ENCODE measurements at regions of chr1 and their contacts with region 1.

Region 1: GRCh38 chr1:111197598-111198284 is 2.7 kb downstream of the DENND2D start:
- DNase-seq: peak; percentile 58 to 78 (median 73)
- H3K4me3 ChIP-seq: peak overlapping the region; percentile 87 to 90
- H3K4me3 Mint-ChIP-seq: peak overlapping the region; percentile 99 to 100 (median 100)
- H3K27ac ChIP-seq: peak overlapping the region; percentile 84
- H3K27ac Mint-ChIP-seq: peak overlapping the region; percentile 92 to 98 (median 97)
- H3K4me1 ChIP-seq: peaks cover 78% of the 10 kb centered on the region
- H3K4me1 Mint-ChIP-seq: peaks cover 61 to 96% (median 71%) of the 10 kb centered on the region in 4 donors
- H3K27me3 ChIP-seq: no peaks in the 10 kb centered on the region
- H3K27me3 Mint-ChIP-seq: no peaks in the 10 kb centered on the region

Region 2: GRCh38 chr1:109722908-109723691 is 1474.6 kb before region 1 on chr1:
- CTCF ChIA-PET with region 1: no interaction called
- POLR2A ChIA-PET with region 1: no interaction called
- intact Hi-C with region 1: no loop called
- DNase-seq: no peak
- H3K4me3 ChIP-seq: no peak overlapping the region
- H3K4me3 Mint-ChIP-seq: no peak overlapping the region
- H3K27ac ChIP-seq: no peak overlapping the region
- H3K27ac Mint-ChIP-seq: peak overlapping the region in 1 of 7 donors; percentile 52
- H3K4me1 ChIP-seq: no peaks in the 10 kb centered on the region
- H3K4me1 Mint-ChIP-seq: no peaks in the 10 kb centered on the region
- H3K27me3 ChIP-seq: no peaks in the 10 kb centered on the region
- H3K27me3 Mint-ChIP-seq: no peaks in the 10 kb centered on the region

Region 3: DNA sequence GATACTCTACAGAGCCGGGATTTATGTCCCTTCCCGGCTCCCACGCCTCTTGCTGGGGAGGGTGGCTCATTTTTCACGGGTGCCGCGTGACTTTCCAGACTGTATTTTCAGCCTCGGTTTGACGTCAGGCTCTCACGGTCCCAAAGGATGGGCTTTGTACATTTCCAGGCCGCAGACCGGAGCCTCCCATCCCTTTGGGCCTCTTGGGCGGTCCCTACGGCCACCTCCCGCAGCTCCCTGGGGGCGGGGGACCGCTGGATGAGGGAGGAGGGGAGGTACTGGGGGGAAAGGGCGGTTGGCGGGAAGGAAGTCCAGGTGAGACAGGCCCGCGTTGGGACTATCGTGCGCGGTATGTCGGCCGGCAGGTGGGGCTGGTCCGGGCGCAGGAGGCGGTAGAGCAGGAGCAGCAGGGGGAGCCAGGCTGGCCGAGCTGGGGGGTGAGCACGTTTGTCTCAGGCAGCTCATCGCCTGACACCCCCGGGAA is 1067.6 kb before region 1 on chr1:
- CTCF ChIA-PET with region 1: no interaction called
- POLR2A ChIA-PET with region 1: no interaction called
- intact Hi-C with region 1: no loop called
- DNase-seq: no peak
- H3K4me3 ChIP-seq: no peak overlapping the region
- H3K4me3 Mint-ChIP-seq: no peak overlapping the region
- H3K27ac ChIP-seq: no peak overlapping the region
- H3K27ac Mint-ChIP-seq: no peak overlapping the region
- H3K4me1 ChIP-seq: no peaks in the 10 kb centered on the region
- H3K4me1 Mint-ChIP-seq: peaks cover 0 to 4% (median under 1%) of the 10 kb centered on the region in 4 donors
- H3K27me3 ChIP-seq: peaks cover 11% of the 10 kb centered on the region
- H3K27me3 Mint-ChIP-seq: peaks cover 32 to 34% of the 10 kb centered on the region in 2 donors

Region 4: DNA sequence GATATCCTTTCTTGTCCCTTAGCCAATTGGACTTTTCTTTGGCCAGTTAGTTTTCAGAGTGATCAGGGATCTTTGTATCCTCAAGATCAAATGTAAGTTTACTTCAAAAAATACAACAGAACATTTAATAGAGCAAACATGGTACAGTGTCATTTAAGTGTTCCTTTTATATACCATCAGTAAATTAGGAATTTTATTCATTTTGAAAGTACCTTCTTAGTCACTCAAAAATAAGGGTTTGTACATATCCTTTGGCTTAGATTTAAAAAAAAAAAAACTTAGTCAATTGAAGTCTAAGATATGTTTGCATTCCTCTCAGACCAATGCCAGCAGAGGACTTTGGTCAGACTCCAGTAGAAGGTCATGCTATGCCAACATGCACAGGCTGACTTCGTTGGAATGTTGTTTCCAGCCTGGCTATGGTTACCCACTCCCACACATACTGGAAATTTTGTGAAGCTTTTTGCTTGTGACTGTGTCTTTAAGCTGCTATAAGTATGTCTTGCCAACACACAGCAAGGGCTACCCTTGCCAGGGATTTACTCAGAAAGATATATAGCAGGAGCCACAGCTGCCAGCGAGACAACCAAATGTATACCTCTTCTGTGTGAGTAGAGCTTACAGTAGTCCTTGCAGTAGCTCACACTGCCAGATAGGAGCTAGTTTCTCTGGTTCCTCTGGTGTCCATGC is 152.6 kb before region 1 on chr1:
- CTCF ChIA-PET with region 1: no interaction called
- POLR2A ChIA-PET with region 1: no interaction called
- intact Hi-C with region 1: no loop called
- DNase-seq: no peak
- H3K4me3 ChIP-seq: no peak overlapping the region
- H3K4me3 Mint-ChIP-seq: no peak overlapping the region
- H3K27ac ChIP-seq: no peak overlapping the region
- H3K27ac Mint-ChIP-seq: no peak overlapping the region
- H3K4me1 ChIP-seq: no peaks in the 10 kb centered on the region
- H3K4me1 Mint-ChIP-seq: no peaks in the 10 kb centered on the region
- H3K27me3 ChIP-seq: no peaks in the 10 kb centered on the region
- H3K27me3 Mint-ChIP-seq: peaks cover 0 to 10% of the 10 kb centered on the region in 2 donors

Region 5: GRCh38 chr1:111082421-111083192 is 115.1 kb before region 1 on chr1:
- CTCF ChIA-PET with region 1: no interaction called
- POLR2A ChIA-PET with region 1: no interaction called
- intact Hi-C with region 1: no loop called
- DNase-seq: no peak
- H3K4me3 ChIP-seq: no peak overlapping the region
- H3K4me3 Mint-ChIP-seq: no peak overlapping the region
- H3K27ac ChIP-seq: no peak overlapping the region
- H3K27ac Mint-ChIP-seq: no peak overlapping the region
- H3K4me1 ChIP-seq: no peaks in the 10 kb centered on the region
- H3K4me1 Mint-ChIP-seq: no peaks in the 10 kb centered on the region
- H3K27me3 ChIP-seq: peaks cover 4% of the 10 kb centered on the region
- H3K27me3 Mint-ChIP-seq: peaks cover 30 to 38% of the 10 kb centered on the region in 2 donors

Region 6: DNA sequence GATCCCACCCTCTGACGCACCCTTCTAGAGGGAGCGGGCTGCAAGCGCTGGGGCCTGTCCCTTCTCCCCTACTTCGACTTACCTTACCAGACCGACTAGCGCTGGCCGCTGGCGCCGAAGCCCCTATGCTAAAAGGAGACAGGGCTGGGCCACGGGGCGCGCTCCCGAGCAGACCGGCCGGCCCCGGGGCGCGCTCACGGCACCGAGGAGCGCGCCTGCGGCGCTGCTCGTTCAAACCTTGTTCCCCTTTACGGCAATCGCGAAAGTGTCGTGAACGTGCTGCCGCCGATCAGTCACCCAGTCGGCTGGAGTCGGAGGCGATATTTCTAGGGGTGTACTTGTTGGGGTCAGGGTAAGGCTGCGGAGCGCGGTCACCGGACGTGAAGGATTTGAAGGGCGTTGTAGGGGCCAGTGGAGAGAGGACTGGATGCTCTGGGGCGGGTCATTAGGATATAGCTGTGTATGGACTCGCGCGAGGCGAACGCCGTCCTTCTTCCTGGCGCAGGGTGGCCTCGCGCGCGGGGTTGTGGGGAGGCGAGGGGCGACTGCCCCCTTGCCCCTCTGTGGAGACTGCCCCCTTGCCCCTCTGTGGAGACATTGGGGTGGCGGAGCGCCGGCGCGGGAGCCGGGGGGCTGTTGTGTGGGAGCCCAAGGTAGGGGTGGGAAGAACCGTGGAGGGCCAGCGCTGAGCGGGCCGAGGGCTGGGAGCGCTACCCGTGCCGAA is 57.6 kb before region 1 on chr1 and contains the starts of genes CEPT1 and DRAM2:
- CTCF ChIA-PET with region 1: interaction called, 3 read pairs
- POLR2A ChIA-PET with region 1: interaction called, 36 read pairs
- intact Hi-C with region 1: loop called (anchors 5 kb)
- DNase-seq: peak; percentile 89 to 95 (median 91)
- H3K4me3 ChIP-seq: peak within 1 kb of the TSS; percentile 57 to 97
- H3K4me3 Mint-ChIP-seq: peak within 1 kb of the TSS; percentile 98 to 100 (median 100)
- H3K27ac ChIP-seq: peak within 1 kb of the TSS; percentile 79
- H3K27ac Mint-ChIP-seq: peak within 1 kb of the TSS; percentile 84 to 100 (median 99)
- H3K4me1 ChIP-seq: peaks cover 54% of the 10 kb centered on the region
- H3K4me1 Mint-ChIP-seq: peaks cover 32 to 54% (median 41%) of the 10 kb centered on the region in 4 donors
- H3K27me3 ChIP-seq: no peaks in the 10 kb centered on the region
- H3K27me3 Mint-ChIP-seq: no peaks in the 10 kb centered on the region
- total RNA-seq, gene CEPT1: 49.1 to 49.6 TPM
- total RNA-seq, gene DRAM2: 37.5 to 38.8 TPM

Region 7: GRCh38 chr1:111183308-111184069 is 14.3 kb before region 1 on chr1:
- CTCF ChIA-PET with region 1: interaction called, 14 read pairs
- POLR2A ChIA-PET with region 1: interaction called, 234 read pairs
- intact Hi-C with region 1: loop called (anchors 2 kb)
- DNase-seq: no peak
- H3K4me3 ChIP-seq: no peak overlapping the region
- H3K4me3 Mint-ChIP-seq: no peak overlapping the region
- H3K27ac ChIP-seq: no peak overlapping the region
- H3K27ac Mint-ChIP-seq: peak overlapping the region in 6 of 7 donors; percentile 55 to 84 (median 70)
- H3K4me1 ChIP-seq: peaks cover 35% of the 10 kb centered on the region
- H3K4me1 Mint-ChIP-seq: peaks cover 47 to 78% (median 59%) of the 10 kb centered on the region in 4 donors
- H3K27me3 ChIP-seq: no peaks in the 10 kb centered on the region
- H3K27me3 Mint-ChIP-seq: no peaks in the 10 kb centered on the region

Region 8: GRCh38 chr1:111334169-111334568 is 136.4 kb after region 1 on chr1:
- CTCF ChIA-PET with region 1: interaction called, 95 read pairs
- POLR2A ChIA-PET with region 1: interaction called, 26 read pairs
- intact Hi-C with region 1: loop called (anchors 1 kb)
- DNase-seq: peak; percentile 49 to 69 (median 68)
- H3K4me3 ChIP-seq: no peak overlapping the region
- H3K4me3 Mint-ChIP-seq: peak overlapping the region in 2 of 8 donors; percentile 24 to 45
- H3K27ac ChIP-seq: no peak overlapping the region
- H3K27ac Mint-ChIP-seq: peak overlapping the region in 3 of 7 donors; percentile 1 to 74 (median 3)
- H3K4me1 ChIP-seq: peaks cover 7% of the 10 kb centered on the region
- H3K4me1 Mint-ChIP-seq: peaks cover 2 to 12% (median 4%) of the 10 kb centered on the region in 4 donors
- H3K27me3 ChIP-seq: no peaks in the 10 kb centered on the region
- H3K27me3 Mint-ChIP-seq: no peaks in the 10 kb centered on the region

Region 9: GRCh38 chr1:111346089-111346885 is 148.5 kb after region 1 on chr1:
- CTCF ChIA-PET with region 1: interaction called, 7 read pairs
- POLR2A ChIA-PET with region 1: interaction called, 12 read pairs
- intact Hi-C with region 1: loop called (anchors 5 kb)
- DNase-seq: peak; percentile 92 to 94 (median 94)
- H3K4me3 ChIP-seq: peak overlapping the region; percentile 59 to 82
- H3K4me3 Mint-ChIP-seq: peak overlapping the region; percentile 87 to 96 (median 92)
- H3K27ac ChIP-seq: peak overlapping the region; percentile 46
- H3K27ac Mint-ChIP-seq: peak overlapping the region; percentile 84 to 97 (median 96)
- H3K4me1 ChIP-seq: peaks cover 16% of the 10 kb centered on the region
- H3K4me1 Mint-ChIP-seq: peaks cover 13 to 25% (median 18%) of the 10 kb centered on the region in 4 donors
- H3K27me3 ChIP-seq: no peaks in the 10 kb centered on the region
- H3K27me3 Mint-ChIP-seq: no peaks in the 10 kb centered on the region

Region 10: GRCh38 chr1:111399792-111400610 is 202.3 kb after region 1 on chr1:
- CTCF ChIA-PET with region 1: interaction called, 63 read pairs
- POLR2A ChIA-PET with region 1: interaction called, 10 read pairs
- intact Hi-C with region 1: loop called (anchors 1 kb)
- DNase-seq: peak in 4 of 5 donors; percentile 27 to 39 (median 33)
- H3K4me3 ChIP-seq: no peak overlapping the region
- H3K4me3 Mint-ChIP-seq: peak overlapping the region in 1 of 8 donors; percentile 18
- H3K27ac ChIP-seq: no peak overlapping the region
- H3K27ac Mint-ChIP-seq: peak overlapping the region in 4 of 7 donors; percentile 18 to 55 (median 34)
- H3K4me1 ChIP-seq: peaks cover 6% of the 10 kb centered on the region
- H3K4me1 Mint-ChIP-seq: peaks cover 7 to 18% (median 13%) of the 10 kb centered on the region in 4 donors
- H3K27me3 ChIP-seq: no peaks in the 10 kb centered on the region
- H3K27me3 Mint-ChIP-seq: no peaks in the 10 kb centered on the region

Region 11: GRCh38 chr1:111441573-111442192 is 243.9 kb after region 1 on chr1:
- CTCF ChIA-PET with region 1: interaction called, 3 read pairs
- POLR2A ChIA-PET with region 1: interaction called, 4 read pairs
- intact Hi-C with region 1: loop called (anchors 2 kb)
- DNase-seq: peak; percentile 62 to 72 (median 64)
- H3K4me3 ChIP-seq: no peak overlapping the region
- H3K4me3 Mint-ChIP-seq: no peak overlapping the region
- H3K27ac ChIP-seq: peak overlapping the region; percentile 12
- H3K27ac Mint-ChIP-seq: peak overlapping the region; percentile 68 to 82 (median 77)
- H3K4me1 ChIP-seq: peaks cover 26% of the 10 kb centered on the region
- H3K4me1 Mint-ChIP-seq: peaks cover 16 to 44% (median 27%) of the 10 kb centered on the region in 4 donors
- H3K27me3 ChIP-seq: no peaks in the 10 kb centered on the region
- H3K27me3 Mint-ChIP-seq: no peaks in the 10 kb centered on the region